ENCODE measurements at regions of chr7 and their contacts with region 1.

Region 1: GRCh38 chr7:33895025-33895804 is 10.1 kb upstream of the BMPER start:
- DNase-seq: no peak
- H3K4me3 ChIP-seq: no peak overlapping the region; the same call in 1 of the 2 replicates
- CTCF ChIP-seq: peak; percentile 99

Region 2: DNA sequence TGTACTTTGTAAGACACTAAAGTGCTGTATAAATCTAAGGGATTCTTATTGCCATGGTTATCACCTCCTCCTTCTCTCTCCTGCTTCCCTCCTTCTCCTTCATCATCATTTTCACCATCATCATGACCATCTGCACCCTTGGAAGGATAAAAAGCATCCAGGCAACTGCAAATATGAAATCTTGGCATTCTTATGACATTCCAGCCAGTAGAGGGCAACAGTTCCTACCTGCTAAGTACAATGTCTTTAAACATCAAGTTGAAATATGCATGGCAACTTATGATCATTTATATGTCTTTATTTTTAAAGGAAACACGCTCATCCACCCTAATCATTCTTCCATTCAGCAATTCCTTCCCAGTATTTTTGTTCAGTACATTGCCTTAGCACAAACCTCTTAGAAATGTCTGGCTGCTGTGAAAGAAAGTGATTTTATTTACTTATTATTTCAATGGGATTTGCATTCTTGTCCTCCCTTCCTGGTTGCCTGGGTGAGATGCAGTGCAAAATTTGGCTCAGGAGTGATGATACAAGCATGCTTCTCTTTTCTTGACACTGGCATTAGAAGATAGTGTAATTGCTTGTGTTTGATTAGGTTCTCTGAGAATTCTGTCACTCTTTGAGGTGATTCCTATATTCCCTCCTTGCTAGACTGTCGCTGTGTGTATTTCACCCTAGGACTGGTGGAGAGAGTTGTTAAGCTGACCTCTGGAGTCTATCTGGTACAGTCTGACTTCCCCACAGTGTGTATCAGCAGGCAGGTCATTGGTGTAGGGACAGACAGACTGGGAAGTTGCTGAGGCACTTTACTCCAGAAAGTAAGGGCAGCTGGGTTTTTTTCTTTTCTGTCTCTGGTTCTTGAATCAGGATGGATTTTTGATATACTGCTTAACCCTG is 178.4 kb before region 1 on chr7:
- CTCF ChIA-PET with region 1: interaction called, 13 read pairs
- POLR2A ChIA-PET with region 1: no interaction called
- DNase-seq: no peak
- H3K4me3 ChIP-seq: no peak overlapping the region
- CTCF ChIP-seq: peak; percentile 48

Region 3: DNA sequence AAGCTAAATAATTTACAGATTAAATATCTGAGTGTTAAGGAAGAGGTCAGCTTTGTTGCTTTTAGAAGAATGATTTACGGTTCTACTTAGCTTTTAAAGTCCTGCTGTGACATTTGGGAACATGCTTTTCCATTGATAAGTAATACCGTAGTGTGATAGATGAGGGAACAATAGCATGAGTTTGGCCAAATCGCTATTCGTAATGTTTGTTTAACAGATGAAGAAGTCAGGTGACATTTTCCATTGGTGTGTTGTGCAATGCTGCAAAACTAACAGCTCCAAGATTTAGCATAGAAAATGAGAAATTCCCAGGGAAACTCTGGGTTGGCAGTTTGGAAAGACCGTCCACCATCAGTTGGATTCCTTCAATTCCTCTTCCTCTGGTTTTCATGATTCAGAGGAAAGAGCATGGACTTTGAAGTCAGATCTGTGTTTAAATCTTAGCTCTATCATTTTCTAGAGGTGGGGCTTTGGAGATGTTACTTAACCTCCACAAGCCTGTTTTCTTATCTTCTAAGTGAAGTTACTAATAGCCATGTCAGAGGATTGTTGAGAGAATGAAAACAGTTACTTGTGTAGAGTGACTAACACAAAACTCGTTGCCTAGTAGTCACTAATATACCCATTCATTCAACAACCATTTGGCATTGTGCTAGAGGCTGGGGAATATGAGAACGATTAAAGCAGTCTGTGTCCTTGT is 130.3 kb before region 1 on chr7:
- CTCF ChIA-PET with region 1: interaction called, 32 read pairs
- POLR2A ChIA-PET with region 1: no interaction called
- DNase-seq: no peak
- H3K4me3 ChIP-seq: no peak overlapping the region
- CTCF ChIP-seq: no peak

Region 4: GRCh38 chr7:33849004-33849403 is 46.2 kb before region 1 on chr7:
- CTCF ChIA-PET with region 1: interaction called, 10 read pairs
- POLR2A ChIA-PET with region 1: no interaction called
- DNase-seq: no peak
- H3K4me3 ChIP-seq: no peak overlapping the region
- CTCF ChIP-seq: no peak

Region 5: DNA sequence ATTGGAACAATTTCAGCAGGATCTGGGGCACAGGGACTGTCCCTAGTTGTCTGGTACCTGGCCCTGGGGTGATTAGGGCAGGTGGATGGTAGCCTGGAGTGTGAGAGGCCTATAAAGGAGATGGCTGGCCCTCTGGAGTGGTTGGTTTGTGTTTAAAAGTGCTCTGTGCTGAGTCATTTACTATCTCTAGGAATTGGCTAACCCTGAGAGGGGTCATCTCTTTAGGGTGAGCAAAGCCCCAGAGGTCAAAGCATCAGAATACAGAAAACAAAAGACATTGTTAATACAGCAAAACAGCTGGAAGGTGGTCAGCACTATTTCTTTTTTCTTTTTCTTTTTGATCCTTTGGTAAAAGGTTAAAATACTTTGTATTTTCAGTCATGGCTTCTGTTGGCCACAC is 33.3 kb before region 1 on chr7:
- CTCF ChIA-PET with region 1: interaction called, 17 read pairs
- POLR2A ChIA-PET with region 1: no interaction called
- DNase-seq: no peak
- H3K4me3 ChIP-seq: no peak overlapping the region
- CTCF ChIP-seq: no peak

Region 6: GRCh38 chr7:33921216-33921938 is 26.2 kb after region 1 on chr7:
- CTCF ChIA-PET with region 1: interaction called, 16 read pairs
- POLR2A ChIA-PET with region 1: no interaction called
- DNase-seq: no peak
- H3K4me3 ChIP-seq: no peak overlapping the region
- CTCF ChIP-seq: no peak

Measured in AG04449 (cell line).